ENCODE measurements at regions of chr16 and their contacts with region 1.

Region 1: DNA sequence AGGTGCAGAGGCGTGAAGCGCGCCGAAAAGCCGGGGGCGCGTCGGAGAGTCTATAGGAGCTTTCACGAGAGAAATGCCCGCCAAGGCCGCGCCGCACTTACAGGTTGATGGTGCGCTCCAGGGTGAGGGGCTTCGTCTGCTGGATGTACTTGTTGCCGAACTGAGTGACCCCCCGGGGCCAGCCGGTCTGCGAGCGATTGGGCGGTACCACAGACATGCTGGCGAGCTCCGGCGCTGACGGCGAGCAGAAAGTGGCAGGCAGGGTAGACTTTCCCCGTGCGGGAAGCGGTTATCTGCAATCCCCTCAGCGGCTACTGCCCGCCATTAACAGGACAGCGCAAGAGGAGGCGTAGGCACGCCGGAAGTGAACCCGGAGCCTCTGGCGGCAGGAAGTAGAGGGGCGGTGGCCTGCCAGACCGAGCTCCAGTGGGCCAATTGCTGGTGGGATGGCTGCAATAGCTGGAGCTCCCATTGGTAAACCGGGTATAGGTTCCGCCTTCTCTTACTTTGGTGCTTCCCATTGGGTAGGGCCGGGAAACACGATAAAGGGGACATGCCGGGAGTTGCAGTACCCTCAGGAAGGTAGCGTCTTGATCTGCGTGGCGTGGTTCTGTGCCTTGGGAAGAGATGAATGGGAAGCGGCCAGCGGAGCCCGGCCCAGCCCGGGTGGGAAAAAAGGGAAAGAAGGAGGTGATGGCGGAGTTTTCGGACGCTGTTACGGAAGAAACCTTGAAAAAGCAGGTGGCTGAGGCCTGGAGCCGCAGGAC is at the starts of genes NUDT21 and OGFOD1:
- DNase-seq: peak; percentile 70 to 81
- H3K4me3 ChIP-seq: peak within 1 kb of the TSS; percentile 82 to 97 (median 94)
- H3K27ac ChIP-seq: peak within 1 kb of the TSS; percentile 84
- H3K4me1 ChIP-seq: peaks cover 0 to 11% (median 2%) of the 10 kb centered on the region in 4 experiments; a peak in 3 of 7 replicates
- H3K27me3 ChIP-seq: no peaks in the 10 kb centered on the region
- CTCF ChIP-seq: no peak
- EP300 ChIP-seq: no peak
- POLR2A ChIP-seq: peak in 1 of 2 experiments; percentile 78; a peak in 2 of 3 replicates
- RAD21 ChIP-seq: no peak
- total RNA-seq, gene NUDT21: 263 and 277 TPM in 2 replicates
- total RNA-seq, gene OGFOD1: 61.4 and 62.4 TPM in 2 replicates

Region 2: DNA sequence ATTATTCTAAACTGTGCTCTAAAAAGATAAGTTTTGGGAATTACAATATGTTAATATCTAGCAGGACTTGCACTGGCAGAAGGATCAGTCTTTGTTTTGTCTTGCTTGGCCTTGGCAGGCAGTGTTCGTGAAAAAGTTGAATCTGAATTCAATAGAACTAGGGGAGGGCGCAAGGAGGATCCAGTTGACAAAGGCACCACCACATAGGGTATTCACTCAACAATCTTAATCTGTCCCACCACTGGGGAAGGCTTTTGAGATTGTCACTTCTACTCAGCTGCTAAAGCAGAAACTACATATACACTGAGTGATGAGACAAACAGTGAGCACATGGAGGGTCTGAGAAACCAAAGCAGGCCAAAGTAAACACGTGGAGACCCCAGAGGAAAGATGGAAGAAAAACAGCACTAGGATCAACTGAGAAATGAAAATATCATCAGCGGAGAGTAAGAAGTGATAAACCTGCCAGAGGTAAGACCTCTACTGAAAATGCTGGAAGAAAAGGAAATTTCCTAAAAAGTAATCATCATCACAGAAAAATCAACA is 28.2 kb before region 1 on chr16:
- CTCF ChIA-PET with region 1: no interaction called
- POLR2A ChIA-PET with region 1: no interaction called
- DNase-seq: no peak
- H3K4me3 ChIP-seq: no peak overlapping the region
- H3K27ac ChIP-seq: no peak overlapping the region
- H3K4me1 ChIP-seq: peaks cover 0 to 12% (median 8%) of the 10 kb centered on the region in 4 experiments; a peak in 6 of 7 replicates
- H3K27me3 ChIP-seq: peaks cover 0 to 6% (median 3%) of the 10 kb centered on the region in 4 experiments; a peak in 3 of 7 replicates
- CTCF ChIP-seq: no peak
- EP300 ChIP-seq: no peak
- POLR2A ChIP-seq: no peak
- RAD21 ChIP-seq: no peak

Region 3: DNA sequence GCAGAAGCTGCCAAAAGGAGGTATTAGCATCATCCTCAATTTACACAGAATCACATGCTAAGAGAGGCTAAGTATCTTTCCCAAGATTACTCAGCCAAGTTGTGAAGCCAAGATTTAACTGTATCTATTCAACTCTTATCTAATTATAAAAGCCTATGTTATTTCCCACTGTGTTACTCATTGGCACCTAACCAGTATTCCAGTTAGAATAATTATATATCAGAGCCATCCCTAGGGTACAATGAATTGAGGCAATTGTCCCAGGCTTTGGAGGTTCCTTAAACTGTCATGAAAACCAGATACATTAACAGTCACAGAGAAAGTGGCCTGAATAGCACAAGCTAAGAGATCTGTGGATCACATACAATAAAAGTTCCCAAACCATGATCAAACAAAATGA is 14.9 kb before region 1 on chr16:
- CTCF ChIA-PET with region 1: no interaction called
- POLR2A ChIA-PET with region 1: interaction called, 12 read pairs
- DNase-seq: no peak
- H3K4me3 ChIP-seq: no peak overlapping the region
- H3K27ac ChIP-seq: no peak overlapping the region
- H3K4me1 ChIP-seq: no peaks in the 10 kb centered on the region
- H3K27me3 ChIP-seq: no peaks in the 10 kb centered on the region
- CTCF ChIP-seq: no peak
- EP300 ChIP-seq: no peak
- POLR2A ChIP-seq: no peak
- RAD21 ChIP-seq: no peak

Region 4: DNA sequence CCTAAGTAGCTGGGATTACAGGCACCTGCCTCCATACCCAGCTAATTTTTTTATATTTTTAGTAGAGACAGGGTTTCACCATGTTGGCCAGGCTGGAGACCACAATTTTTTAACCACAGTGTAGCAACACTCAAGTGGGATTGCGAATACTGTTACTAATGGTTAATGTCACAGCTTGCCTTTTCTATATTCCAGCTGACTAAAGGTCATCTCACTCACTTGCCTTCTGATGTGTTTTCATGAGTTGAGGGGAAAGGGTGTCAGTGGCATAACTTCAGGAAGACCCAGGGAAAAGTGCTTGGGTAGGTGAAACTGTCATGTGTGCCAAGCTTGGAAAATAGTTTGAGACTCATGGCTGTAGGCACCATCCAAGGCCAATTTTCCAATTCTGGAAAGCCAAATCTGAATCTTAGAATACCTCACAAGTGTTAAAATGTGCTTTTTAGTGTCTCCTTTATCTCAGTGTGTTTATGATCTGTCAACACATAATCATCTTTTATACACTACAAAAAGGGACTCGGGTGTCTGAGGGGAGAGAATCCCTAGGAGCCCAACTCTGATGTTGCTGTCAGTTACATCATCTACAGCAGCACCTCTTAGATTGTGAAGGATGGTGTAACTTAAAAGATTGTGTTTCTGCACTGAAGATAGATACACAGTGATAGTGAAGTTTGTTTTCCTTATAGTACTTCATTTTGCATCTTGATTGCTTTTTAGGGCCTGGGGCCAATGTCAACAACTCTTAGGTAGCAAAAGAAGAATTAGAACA is 27.3 kb after region 1 on chr16:
- CTCF ChIA-PET with region 1: no interaction called
- POLR2A ChIA-PET with region 1: interaction called, 13 read pairs
- DNase-seq: no peak
- H3K4me3 ChIP-seq: no peak overlapping the region
- H3K27ac ChIP-seq: no peak overlapping the region
- H3K4me1 ChIP-seq: peaks cover 0 to 4% (median 0%) of the 10 kb centered on the region in 4 experiments; a peak in 2 of 7 replicates
- H3K27me3 ChIP-seq: no peaks in the 10 kb centered on the region
- CTCF ChIP-seq: no peak
- EP300 ChIP-seq: no peak
- POLR2A ChIP-seq: no peak
- RAD21 ChIP-seq: no peak

Measured in H1 (cell line).